Common myeloid progenitor, CD34-positive (primary cell): ENCODE measurements at regions of chr4 and their contacts with region 1.

Region 1: GRCh38 chr4:83618431-83618830 is 82.5 kb downstream of the GPAT3 start:
- DNase-seq: peak in 2 of 3 donors; percentile 19 to 40
- H3K4me3 ChIP-seq: peak overlapping the region in 1 of 7 experiments; percentile 35
- H3K27ac ChIP-seq: no peak overlapping the region
- H3K4me1 ChIP-seq: peaks cover 11 to 38% (median 24%) of the 10 kb centered on the region in 4 experiments
- H3K27me3 ChIP-seq: no peaks in the 10 kb centered on the region

Region 2: DNA sequence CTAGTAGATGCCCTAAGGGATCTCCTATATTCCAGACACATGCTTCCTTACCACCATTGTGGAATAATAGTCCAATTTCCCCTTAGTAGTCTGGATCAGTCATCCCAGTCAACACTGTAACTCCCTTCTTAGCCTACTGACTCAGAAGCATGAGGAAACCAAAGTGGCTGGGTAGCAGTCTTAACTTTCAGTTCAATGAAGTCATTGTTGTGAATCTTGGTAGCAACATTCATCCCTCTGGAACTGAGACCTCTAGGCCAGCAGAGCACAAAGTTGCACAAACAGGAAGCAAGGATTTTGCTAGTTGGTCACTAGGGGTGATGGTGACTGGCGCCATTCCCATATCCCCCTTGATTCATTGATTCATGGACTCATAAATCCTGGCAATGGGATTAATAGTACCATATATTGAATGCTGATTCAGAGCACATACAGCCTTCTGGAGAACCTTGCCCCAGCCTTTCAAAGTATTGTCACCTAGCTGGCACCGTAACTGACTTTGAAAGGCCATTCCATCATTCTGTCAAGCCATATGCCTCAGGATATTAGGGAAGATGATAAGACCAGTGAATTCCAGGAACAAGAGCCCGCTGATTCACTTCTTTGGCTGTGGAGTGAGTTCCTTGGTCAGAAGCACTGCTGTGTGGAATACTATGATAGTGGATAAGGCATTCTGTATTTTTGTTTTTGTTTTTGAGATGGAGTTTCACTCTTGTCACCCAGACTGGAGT is 102.2 kb before region 1 on chr4:
- CTCF ChIA-PET with region 1: no interaction called
- POLR2A ChIA-PET with region 1: no interaction called
- DNase-seq: no peak
- H3K4me3 ChIP-seq: no peak overlapping the region
- H3K27ac ChIP-seq: no peak overlapping the region
- H3K4me1 ChIP-seq: no peaks in the 10 kb centered on the region
- H3K27me3 ChIP-seq: no peaks in the 10 kb centered on the region

Region 3: DNA sequence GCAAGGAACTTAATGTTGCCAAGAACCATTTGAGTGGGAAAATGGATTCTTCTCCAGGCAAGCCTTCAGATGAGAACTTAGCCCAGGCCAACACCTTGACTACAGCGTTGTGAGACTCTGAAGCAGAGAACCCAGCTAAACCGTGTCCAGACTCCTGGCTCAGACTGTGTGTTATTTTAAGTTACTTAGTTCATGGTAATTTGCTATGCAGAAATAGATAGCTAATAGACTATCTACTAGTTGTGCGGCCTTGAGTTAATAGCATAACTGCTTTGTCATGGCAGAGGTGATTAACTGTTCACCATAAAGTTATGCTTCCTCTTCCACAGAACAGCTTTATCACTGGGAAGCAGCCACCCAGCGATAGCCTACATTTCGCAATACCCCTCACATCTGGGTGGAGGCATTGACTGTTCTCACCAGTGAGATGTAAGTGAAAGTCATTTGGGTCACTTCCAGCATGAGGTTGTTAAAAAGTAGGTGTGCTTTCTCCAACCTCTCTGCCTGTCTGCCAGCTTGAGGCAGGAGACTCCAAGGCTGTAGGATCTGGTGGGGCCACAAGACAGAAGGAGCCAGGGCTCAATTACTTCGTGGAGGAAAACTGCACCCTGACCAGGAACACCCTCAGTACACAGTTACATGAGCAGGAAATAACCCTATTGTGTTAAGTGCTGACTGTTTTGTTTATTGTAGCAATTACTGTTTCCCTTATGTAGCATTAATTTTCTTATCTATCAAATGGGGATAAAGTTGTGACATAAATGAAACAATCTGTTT is 11.7 kb after region 1 on chr4:
- CTCF ChIA-PET with region 1: interaction called, 12 read pairs
- POLR2A ChIA-PET with region 1: no interaction called
- DNase-seq: peak; percentile 98 to 100 (median 99)
- H3K4me3 ChIP-seq: peak overlapping the region in 1 of 7 experiments; percentile 17
- H3K27ac ChIP-seq: peak overlapping the region in 1 of 2 experiments; percentile 60
- H3K4me1 ChIP-seq: peaks cover 10 to 29% (median 18%) of the 10 kb centered on the region in 4 experiments
- H3K27me3 ChIP-seq: no peaks in the 10 kb centered on the region

Region 4: GRCh38 chr4:83662204-83662603 is 43.8 kb after region 1 on chr4:
- CTCF ChIA-PET with region 1: no interaction called
- POLR2A ChIA-PET with region 1: no interaction called
- DNase-seq: no peak
- H3K4me3 ChIP-seq: no peak overlapping the region
- H3K27ac ChIP-seq: no peak overlapping the region
- H3K4me1 ChIP-seq: no peaks in the 10 kb centered on the region
- H3K27me3 ChIP-seq: no peaks in the 10 kb centered on the region

Region 5: DNA sequence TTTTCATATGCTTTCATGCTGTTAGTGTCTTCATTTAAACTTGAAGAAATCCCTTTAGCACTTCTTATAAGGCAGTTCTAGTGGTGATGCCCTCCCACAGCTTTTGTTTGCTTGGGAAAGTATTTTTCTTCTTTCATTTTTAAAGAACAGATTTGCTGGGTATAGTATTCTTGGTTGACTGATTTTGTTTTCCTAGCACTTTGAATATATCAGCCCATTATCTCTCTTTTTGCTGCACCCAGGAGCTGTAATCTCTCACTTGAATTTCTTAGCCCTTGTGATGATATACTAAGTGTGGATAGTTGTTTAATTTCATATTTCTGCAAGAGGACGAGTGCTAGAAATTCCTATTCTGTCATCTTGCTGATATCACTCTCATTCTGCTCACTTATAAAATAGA is 201.2 kb after region 1 on chr4:
- CTCF ChIA-PET with region 1: no interaction called
- POLR2A ChIA-PET with region 1: no interaction called
- DNase-seq: no peak
- H3K4me3 ChIP-seq: no peak overlapping the region
- H3K27ac ChIP-seq: no peak overlapping the region
- H3K4me1 ChIP-seq: no peaks in the 10 kb centered on the region
- H3K27me3 ChIP-seq: no peaks in the 10 kb centered on the region